Activated T-helper 2 cell treated with anti-CD3 and anti-CD28 coated beads, Interferon-gamma antibody, Interleukin-2, Interleukin-4, amounts not matched to agents 10 μg/mL and 5 μg/mL and 100 μg/mL, durations not matched to agents 14 hours and 24 hours and 36 hours (primary cell): ENCODE measurements at regions of chr3 and their contacts with region 1.

Region 1: DNA sequence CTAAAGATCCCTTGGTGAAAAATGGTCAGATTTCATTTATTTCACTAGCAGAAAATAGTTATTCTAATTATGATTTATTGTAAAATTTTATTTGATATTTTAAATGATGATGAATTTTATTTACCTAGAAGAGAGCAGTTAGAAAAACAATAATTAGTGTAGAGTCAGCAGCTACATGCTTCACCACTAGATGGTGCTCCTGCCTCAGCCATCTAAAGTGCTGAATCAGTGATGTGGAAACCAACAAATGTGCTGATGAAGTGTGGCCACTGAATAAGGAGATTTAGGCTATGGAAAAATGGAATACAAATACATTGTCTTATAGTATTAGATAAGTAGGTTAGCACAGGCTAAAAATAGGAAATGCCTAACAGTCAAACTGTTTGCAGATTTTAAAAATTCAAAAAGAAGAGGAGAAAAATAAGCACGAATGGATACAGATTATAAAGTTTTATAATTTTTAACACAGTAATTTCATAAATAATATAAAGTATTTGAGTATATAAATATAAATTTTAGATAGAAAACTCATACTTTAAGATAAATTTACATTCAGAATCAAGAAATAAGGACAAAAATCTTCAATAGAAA is 109.8 kb downstream of the PPP2R3A start:
- DNase-seq: peak; percentile 53
- H3K4me3 Mint-ChIP-seq: no peak overlapping the region
- H3K27ac Mint-ChIP-seq: no peak overlapping the region
- H3K4me1 Mint-ChIP-seq: peaks cover 5% of the 10 kb centered on the region
- H3K27me3 Mint-ChIP-seq: peaks cover 7% of the 10 kb centered on the region

Region 2: GRCh38 chr3:136250226-136250902 is 175.1 kb after region 1 on chr3 and contains the start of gene PCCB:
- intact Hi-C with region 1: loop called (anchors 2 kb)
- DNase-seq: peak; percentile 89
- H3K4me3 Mint-ChIP-seq: peak within 1 kb of the TSS; percentile 88
- H3K27ac Mint-ChIP-seq: peak within 1 kb of the TSS; percentile 90
- H3K4me1 Mint-ChIP-seq: peaks cover 17% of the 10 kb centered on the region
- H3K27me3 Mint-ChIP-seq: no peaks in the 10 kb centered on the region
- total RNA-seq, gene PCCB: 44.5 and 47.5 TPM in 2 replicates

Region 3: GRCh38 chr3:136390574-136390973 is 315.3 kb after region 1 on chr3:
- intact Hi-C with region 1: loop called (anchors 5 kb)
- DNase-seq: no peak
- H3K4me3 Mint-ChIP-seq: no peak overlapping the region
- H3K27ac Mint-ChIP-seq: no peak overlapping the region
- H3K4me1 Mint-ChIP-seq: no peaks in the 10 kb centered on the region
- H3K27me3 Mint-ChIP-seq: no peaks in the 10 kb centered on the region

Region 4: GRCh38 chr3:136818769-136819391 is 743.6 kb after region 1 on chr3 and contains the start of gene SLC35G2:
- intact Hi-C with region 1: loop called (anchors 10 kb)
- DNase-seq: no peak
- H3K4me3 Mint-ChIP-seq: peak within 1 kb of the TSS; percentile 85
- H3K27ac Mint-ChIP-seq: peak within 1 kb of the TSS; percentile 83
- H3K4me1 Mint-ChIP-seq: peaks cover 23% of the 10 kb centered on the region
- H3K27me3 Mint-ChIP-seq: peaks cover 31% of the 10 kb centered on the region
- total RNA-seq, gene SLC35G2: 7.3 and 7.7 TPM in 2 replicates

Region 5: DNA sequence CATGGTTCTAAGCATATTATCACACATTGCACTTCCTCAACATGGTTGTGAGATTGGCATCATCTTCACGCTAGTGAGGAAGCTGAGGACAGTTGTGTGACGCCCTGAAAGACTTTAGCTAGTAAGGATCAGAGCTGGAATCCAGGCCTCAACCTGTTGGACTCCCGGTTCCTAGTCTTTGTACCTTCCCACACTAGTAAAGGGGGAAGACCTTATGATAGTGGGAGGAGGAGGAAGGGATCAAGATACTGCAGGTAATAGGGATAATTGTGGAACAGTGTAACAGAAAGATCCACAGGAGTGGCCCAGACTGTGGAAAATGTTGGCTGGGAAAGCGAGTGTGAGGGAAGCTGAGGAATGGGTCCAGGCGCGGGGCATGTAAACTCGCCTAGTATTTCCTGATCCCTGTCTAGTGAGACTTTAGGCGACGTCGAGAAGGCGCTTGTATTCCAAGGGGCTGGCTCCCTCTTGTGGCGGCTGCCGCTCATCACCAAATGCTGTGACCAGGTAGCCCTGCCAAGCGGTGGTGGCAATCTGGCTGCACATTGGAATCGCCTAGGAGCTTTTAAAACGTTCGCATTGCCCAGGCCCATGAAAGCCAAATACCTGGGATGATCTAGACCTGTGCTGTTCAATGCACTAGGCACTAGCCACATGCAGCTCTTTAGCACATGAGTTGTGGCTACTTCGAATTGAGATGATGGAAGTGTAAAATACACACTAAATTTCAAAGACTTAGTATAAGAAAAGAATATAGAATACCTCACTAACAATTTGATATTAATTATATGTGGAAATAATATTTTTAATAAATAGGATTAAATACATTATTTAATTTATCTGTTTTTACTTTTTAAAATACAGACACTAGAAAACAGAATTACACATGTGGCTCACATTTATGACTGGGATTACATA is 1895.9 kb after region 1 on chr3:
- intact Hi-C with region 1: loop called (anchors 10 kb)
- DNase-seq: peak; percentile 29
- H3K4me3 Mint-ChIP-seq: no peak overlapping the region
- H3K27ac Mint-ChIP-seq: no peak overlapping the region
- H3K4me1 Mint-ChIP-seq: no peaks in the 10 kb centered on the region
- H3K27me3 Mint-ChIP-seq: peaks cover 2% of the 10 kb centered on the region